Activated naive CD4-positive, alpha-beta T cell treated with anti-CD3 and anti-CD28 coated beads for 36 hours (primary cell): ENCODE measurements at regions of chr6 and their contacts with region 1.

Region 1: GRCh38 chr6:135105710-135106109 is 51.1 kb upstream of the HBS1L start:
- DNase-seq: no peak
- H3K4me3 Mint-ChIP-seq: no peak overlapping the region
- H3K27ac Mint-ChIP-seq: no peak overlapping the region
- H3K4me1 Mint-ChIP-seq: peaks cover 45% of the 10 kb centered on the region
- H3K27me3 Mint-ChIP-seq: no peaks in the 10 kb centered on the region

Region 2: GRCh38 chr6:135094403-135094848 is 11.3 kb before region 1 on chr6:
- CTCF ChIA-PET with region 1: interaction called, 4 read pairs
- intact Hi-C with region 1: loop called (anchors 1 kb)
- DNase-seq: peak; percentile 59
- H3K4me3 Mint-ChIP-seq: no peak overlapping the region
- H3K27ac Mint-ChIP-seq: peak overlapping the region; percentile 71
- H3K4me1 Mint-ChIP-seq: peaks cover 56% of the 10 kb centered on the region
- H3K27me3 Mint-ChIP-seq: no peaks in the 10 kb centered on the region